GM23248 (cell line): ENCODE measurements at regions of chr10 and their contacts with region 1.

Region 1: GRCh38 chr10:58064714-58065528 is 202.8 kb downstream of the IPMK start:
- DNase-seq: peak; percentile 68
- H3K4me3 ChIP-seq: no peak overlapping the region
- H3K27ac ChIP-seq: no peak overlapping the region
- H3K4me1 ChIP-seq: no peaks in the 10 kb centered on the region
- H3K27me3 ChIP-seq: peaks cover 44% of the 10 kb centered on the region

Region 2: GRCh38 chr10:57338823-57339558 is 725.9 kb before region 1 on chr10:
- in situ Hi-C with region 1: loop called (anchors 25 kb)
- DNase-seq: peak; percentile 60
- H3K4me3 ChIP-seq: no peak overlapping the region
- H3K27ac ChIP-seq: no peak overlapping the region
- H3K4me1 ChIP-seq: no peaks in the 10 kb centered on the region
- H3K27me3 ChIP-seq: no peaks in the 10 kb centered on the region

Region 3: DNA sequence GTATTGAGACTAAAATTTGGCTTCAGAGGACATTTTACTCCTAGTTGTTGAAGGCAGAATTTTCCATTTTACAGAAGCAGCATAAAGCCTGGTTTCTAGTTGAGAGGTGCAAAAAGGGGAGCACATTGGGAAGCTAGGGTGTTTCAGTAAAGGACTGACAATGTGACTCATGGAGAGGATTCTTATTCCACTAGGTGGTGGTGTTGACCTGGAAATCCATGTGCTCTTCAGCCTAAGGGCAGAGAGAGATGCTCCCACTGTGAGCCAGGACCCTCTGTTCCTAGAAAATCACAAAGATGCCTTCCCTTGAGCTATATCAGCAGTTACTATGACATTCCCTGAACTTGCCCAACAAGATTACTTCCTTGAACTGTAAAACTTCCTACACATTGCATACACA is 485.0 kb before region 1 on chr10:
- in situ Hi-C with region 1: loop called (anchors 10 kb)
- DNase-seq: peak; percentile 37
- H3K4me3 ChIP-seq: no peak overlapping the region
- H3K27ac ChIP-seq: no peak overlapping the region
- H3K4me1 ChIP-seq: no peaks in the 10 kb centered on the region
- H3K27me3 ChIP-seq: no peaks in the 10 kb centered on the region